ENCODE measurements at regions of chr3 and their contacts with region 1.

Region 1: GRCh38 chr3:23202921-23203707 is at the start of gene UBE2E2:
- DNase-seq: peak; percentile 58
- H3K4me3 Mint-ChIP-seq: peak within 1 kb of the TSS; percentile 83
- H3K27ac Mint-ChIP-seq: peak within 1 kb of the TSS; percentile 50
- H3K4me1 Mint-ChIP-seq: peaks cover 18% of the 10 kb centered on the region
- H3K27me3 Mint-ChIP-seq: peaks cover 6% of the 10 kb centered on the region
- total RNA-seq, gene UBE2E2: 11.6 to 14.0 TPM

Region 2: DNA sequence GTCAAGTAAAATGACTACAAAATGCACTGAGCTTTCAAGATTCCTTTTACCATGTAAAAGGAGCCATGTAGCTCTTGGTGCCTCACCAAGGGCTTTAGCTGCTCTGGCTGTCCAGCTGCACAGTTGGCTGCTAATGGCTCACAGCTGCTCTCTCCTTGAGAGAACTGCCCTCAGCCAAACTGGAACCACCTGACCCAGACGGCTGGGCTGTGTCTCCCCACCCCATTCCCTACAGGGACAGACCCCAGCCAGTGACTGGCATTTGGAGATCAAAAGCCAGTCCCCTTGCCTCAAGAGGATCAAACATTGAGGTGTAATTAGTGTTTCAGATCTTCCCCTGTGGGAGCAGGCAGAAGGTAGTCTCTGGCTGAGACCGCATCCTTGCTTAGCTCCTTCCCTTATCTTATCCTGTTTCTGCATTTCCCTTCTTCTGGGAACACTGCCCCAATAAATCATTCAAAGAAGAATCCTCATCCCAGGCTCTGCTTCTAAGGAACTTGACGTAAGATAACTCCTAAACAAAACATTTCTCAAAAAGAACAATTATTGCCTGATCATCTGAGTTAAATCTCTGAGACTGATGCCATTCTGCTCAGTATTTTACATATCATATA is 28.6 kb before region 1 on chr3:
- CTCF ChIA-PET with region 1: no interaction called
- intact Hi-C with region 1: no loop called
- DNase-seq: no peak
- H3K4me3 Mint-ChIP-seq: no peak overlapping the region
- H3K27ac Mint-ChIP-seq: no peak overlapping the region
- H3K4me1 Mint-ChIP-seq: no peaks in the 10 kb centered on the region
- H3K27me3 Mint-ChIP-seq: peaks cover 17% of the 10 kb centered on the region

Region 3: DNA sequence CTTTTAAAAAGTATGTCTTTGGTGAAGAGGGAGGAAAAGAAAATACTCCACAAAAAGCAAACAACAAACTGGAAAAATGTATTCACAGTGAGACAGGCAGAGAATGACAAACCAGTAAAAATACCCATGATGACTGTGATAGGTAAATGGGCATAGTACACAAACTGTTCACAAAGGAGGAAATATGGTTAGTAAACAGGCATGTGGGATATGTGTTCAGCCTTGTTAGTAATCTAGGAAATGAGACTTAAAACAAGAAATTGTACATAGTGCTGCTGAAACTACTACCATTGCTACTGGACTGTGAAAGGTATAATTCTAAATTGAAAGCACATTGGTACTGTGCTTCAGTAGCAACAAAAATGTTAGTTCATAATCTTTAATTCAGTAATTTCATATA is 50.1 kb after region 1 on chr3:
- CTCF ChIA-PET with region 1: no interaction called
- intact Hi-C with region 1: loop called (anchors 5 kb)
- DNase-seq: no peak
- H3K4me3 Mint-ChIP-seq: no peak overlapping the region
- H3K27ac Mint-ChIP-seq: no peak overlapping the region
- H3K4me1 Mint-ChIP-seq: peaks cover 45% of the 10 kb centered on the region
- H3K27me3 Mint-ChIP-seq: no peaks in the 10 kb centered on the region

Region 4: GRCh38 chr3:23324745-23325144 is 121.6 kb after region 1 on chr3:
- CTCF ChIA-PET with region 1: no interaction called
- intact Hi-C with region 1: loop called (anchors 1 kb)
- DNase-seq: no peak
- H3K4me3 Mint-ChIP-seq: no peak overlapping the region
- H3K27ac Mint-ChIP-seq: no peak overlapping the region
- H3K4me1 Mint-ChIP-seq: peaks cover 34% of the 10 kb centered on the region
- H3K27me3 Mint-ChIP-seq: no peaks in the 10 kb centered on the region

Region 5: GRCh38 chr3:23916886-23917678 is 714.0 kb after region 1 on chr3 and contains the starts of genes NKIRAS1 and RPL15:
- CTCF ChIA-PET with region 1: no interaction called
- intact Hi-C with region 1: loop called (anchors 2 kb)
- DNase-seq: peak; percentile 97
- H3K4me3 Mint-ChIP-seq: peak within 1 kb of the TSS; percentile 94
- H3K27ac Mint-ChIP-seq: peak within 1 kb of the TSS; percentile 99
- H3K4me1 Mint-ChIP-seq: peaks cover 47% of the 10 kb centered on the region
- H3K27me3 Mint-ChIP-seq: no peaks in the 10 kb centered on the region
- total RNA-seq, gene NKIRAS1: 2.4 to 3.1 TPM
- total RNA-seq, gene RPL15: 2,861 to 2,959 TPM

Measured in activated naive CD4-positive, alpha-beta T cell treated with anti-CD3 and anti-CD28 coated beads for 36 hours (primary cell).